ENCODE measurements at regions of chr1 and their contacts with region 1.

Region 1: DNA sequence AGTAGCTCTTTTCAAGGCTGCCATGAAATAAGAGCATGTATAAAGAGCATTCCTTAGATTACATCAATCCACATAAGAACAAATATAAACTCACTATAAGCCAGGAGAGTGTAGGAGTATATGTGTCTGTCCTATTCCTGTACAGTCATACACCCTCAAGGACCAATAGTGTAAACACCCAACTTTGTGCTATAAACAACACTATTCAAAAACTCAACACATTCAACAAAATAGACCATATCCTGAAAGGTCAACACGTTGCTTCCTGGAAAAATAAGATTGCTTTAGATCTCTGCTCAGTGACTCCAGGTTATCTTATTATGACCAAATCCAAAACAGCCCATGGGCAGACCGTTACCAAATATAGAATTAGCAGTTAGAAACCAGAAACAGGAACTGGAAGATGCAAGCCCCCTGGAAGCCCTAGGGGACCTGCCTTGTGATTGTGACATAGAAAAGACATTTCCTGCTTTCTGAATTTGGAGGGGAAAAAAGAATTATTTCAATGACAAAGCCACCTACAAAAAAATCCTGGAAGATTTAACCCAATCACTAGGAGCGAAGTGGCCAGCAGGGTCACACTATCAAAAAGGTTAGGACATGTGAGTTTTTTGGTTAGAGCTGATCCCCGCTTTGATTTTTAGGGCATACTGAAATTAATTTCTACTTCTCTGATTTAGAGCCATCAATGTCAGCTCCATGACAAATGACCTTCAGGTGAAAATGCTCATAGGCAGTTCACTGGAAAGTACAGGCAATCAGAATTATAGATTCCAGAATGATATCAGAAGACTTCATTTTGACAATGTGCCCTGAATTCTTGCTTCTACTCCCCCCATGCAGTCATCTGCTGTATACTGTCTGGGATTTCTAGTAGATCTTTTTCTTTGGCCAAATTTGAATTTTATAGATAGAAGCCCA is 59.9 kb downstream of the LRRC8C start:
- DNase-seq: peak; percentile 80
- H3K4me3 ChIP-seq: peak overlapping the region; percentile 30
- H3K27ac ChIP-seq: peak overlapping the region; percentile 81
- H3K4me1 ChIP-seq: peaks cover 51% of the 10 kb centered on the region
- CTCF ChIP-seq: no peak

Region 2: GRCh38 chr1:89657886-89658285 is 35.0 kb before region 1 on chr1:
- CTCF ChIA-PET with region 1: no interaction called
- POLR2A ChIA-PET with region 1: interaction called, 13 read pairs
- intact Hi-C with region 1: no loop called
- DNase-seq: peak; percentile 29
- H3K4me3 ChIP-seq: no peak overlapping the region
- H3K27ac ChIP-seq: no peak overlapping the region
- H3K4me1 ChIP-seq: peaks cover 43% of the 10 kb centered on the region
- CTCF ChIP-seq: no peak

Region 3: GRCh38 chr1:89675677-89676076 is 17.2 kb before region 1 on chr1:
- CTCF ChIA-PET with region 1: no interaction called
- POLR2A ChIA-PET with region 1: interaction called, 14 read pairs
- intact Hi-C with region 1: no loop called
- DNase-seq: no peak
- H3K4me3 ChIP-seq: no peak overlapping the region
- H3K27ac ChIP-seq: no peak overlapping the region
- H3K4me1 ChIP-seq: peaks cover 14% of the 10 kb centered on the region
- CTCF ChIP-seq: no peak

Region 4: DNA sequence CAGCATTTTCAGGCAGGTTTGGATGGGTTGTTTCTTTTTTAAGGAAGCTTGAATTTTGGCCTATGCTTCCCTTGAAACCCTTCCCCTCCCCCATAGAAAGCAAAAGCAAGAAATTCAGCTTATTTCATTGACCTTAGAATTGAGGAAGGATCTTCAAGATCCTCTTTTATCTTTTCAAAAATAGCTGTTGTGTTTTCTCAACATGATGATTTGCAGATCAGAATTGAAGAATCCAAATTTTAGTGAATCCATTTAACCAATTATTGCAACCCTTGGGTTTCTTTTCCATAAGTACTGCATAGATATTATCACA is 13.8 kb after region 1 on chr1:
- CTCF ChIA-PET with region 1: interaction called, 3 read pairs
- POLR2A ChIA-PET with region 1: interaction called, 13 read pairs
- intact Hi-C with region 1: no loop called
- DNase-seq: peak; percentile 46
- H3K4me3 ChIP-seq: peak overlapping the region; percentile 44
- H3K27ac ChIP-seq: peak overlapping the region; percentile 84
- H3K4me1 ChIP-seq: peaks cover 41% of the 10 kb centered on the region
- CTCF ChIP-seq: no peak

Region 5: DNA sequence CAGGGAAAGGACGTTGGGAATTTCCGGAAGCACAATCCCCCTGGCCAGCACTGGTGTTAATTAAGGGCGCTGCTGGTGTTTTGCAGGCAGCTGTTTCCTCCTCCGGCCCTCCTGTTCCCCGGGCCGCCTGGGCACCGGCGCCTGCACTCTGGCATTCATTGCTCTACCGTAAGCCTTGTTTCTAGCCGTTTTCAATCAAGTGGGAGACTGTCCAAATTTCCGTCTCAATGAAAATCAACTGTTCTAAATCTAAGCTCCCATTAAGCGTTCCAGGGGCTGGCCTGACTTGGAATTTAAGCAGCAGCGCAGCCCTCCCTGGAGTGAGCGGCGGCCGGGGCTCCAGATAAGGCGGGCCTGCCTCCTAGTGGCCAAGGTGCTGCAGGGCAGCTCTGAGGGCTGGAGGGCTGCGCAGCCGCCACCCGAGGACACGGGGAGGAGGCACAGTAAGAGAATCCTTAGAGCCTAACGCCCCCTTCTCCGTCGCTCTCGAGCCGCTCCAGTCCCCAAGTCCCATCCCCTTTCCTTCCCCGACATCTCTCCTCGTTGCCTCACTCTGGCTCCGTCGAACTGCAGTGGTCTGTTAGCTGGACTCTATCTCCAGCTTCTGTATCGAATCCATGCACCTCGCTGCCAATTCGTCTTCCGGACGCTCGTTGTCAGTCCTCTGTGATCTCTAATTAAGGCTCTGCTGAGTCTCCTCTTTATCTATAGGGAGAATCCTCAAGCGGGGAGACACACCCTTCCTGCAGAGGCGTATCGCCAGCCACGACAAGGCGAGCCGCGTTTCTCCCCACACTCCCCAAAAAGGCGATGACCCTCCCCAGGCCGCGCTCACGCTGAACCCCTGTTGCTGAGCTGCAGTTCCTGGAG is 70.2 kb after region 1 on chr1:
- CTCF ChIA-PET with region 1: interaction called, 4 read pairs
- POLR2A ChIA-PET with region 1: interaction called, 3 read pairs
- intact Hi-C with region 1: loop called (anchors 1 kb)
- DNase-seq: peak; percentile 87
- H3K4me3 ChIP-seq: peak overlapping the region; percentile 37
- H3K27ac ChIP-seq: no peak overlapping the region
- H3K4me1 ChIP-seq: peaks cover 16% of the 10 kb centered on the region
- CTCF ChIP-seq: peak; percentile 96